Esophagus muscularis mucosa (tissue), 4 donors: ENCODE measurements at regions of chr7 and their contacts with region 1.

Region 1: GRCh38 chr7:41705109-41705901 is 2.4 kb upstream of the INHBA start:
- DNase-seq: peak; percentile 95
- H3K4me3 ChIP-seq: peak overlapping the region; percentile 56 to 66 (median 58)
- H3K27ac ChIP-seq: peak overlapping the region; percentile 83 to 94 (median 88)
- H3K4me1 ChIP-seq: peaks cover 19 to 62% (median 59%) of the 10 kb centered on the region in 4 donors
- H3K27me3 ChIP-seq: no peaks in the 10 kb centered on the region
- CTCF ChIP-seq: peak; percentile 69 to 74 (median 73)
- EP300 ChIP-seq: no peak
- POLR2A ChIP-seq: no peak

Region 2: DNA sequence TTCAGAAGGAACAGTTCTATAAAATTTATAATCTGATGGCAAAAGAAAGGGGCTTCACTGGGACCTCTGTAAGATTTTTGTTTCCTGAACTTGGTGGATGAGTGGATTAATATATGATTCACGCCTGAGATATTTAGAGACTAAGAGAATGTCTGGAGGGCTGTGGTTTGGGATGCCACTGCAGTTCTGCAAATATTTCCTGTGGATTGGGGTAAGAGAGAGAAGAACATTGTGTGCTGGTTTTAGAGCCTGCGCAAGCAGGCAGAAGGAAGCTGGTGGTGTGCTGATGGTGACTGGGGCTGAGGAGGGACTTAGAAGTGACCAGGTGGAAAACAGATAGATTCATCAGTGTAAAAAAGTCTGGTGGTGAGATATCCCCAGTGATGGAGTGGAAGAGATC is 1483.5 kb before region 1 on chr7:
- intact Hi-C with region 1: loop called (anchors 10 kb)
- DNase-seq: no peak
- H3K4me3 ChIP-seq: no peak overlapping the region
- H3K27ac ChIP-seq: peak overlapping the region; percentile 52 to 78 (median 66)
- H3K4me1 ChIP-seq: peaks cover 0 to 48% (median 36%) of the 10 kb centered on the region in 4 donors
- H3K27me3 ChIP-seq: no peaks in the 10 kb centered on the region
- CTCF ChIP-seq: no peak
- EP300 ChIP-seq: no peak
- POLR2A ChIP-seq: no peak

Region 3: DNA sequence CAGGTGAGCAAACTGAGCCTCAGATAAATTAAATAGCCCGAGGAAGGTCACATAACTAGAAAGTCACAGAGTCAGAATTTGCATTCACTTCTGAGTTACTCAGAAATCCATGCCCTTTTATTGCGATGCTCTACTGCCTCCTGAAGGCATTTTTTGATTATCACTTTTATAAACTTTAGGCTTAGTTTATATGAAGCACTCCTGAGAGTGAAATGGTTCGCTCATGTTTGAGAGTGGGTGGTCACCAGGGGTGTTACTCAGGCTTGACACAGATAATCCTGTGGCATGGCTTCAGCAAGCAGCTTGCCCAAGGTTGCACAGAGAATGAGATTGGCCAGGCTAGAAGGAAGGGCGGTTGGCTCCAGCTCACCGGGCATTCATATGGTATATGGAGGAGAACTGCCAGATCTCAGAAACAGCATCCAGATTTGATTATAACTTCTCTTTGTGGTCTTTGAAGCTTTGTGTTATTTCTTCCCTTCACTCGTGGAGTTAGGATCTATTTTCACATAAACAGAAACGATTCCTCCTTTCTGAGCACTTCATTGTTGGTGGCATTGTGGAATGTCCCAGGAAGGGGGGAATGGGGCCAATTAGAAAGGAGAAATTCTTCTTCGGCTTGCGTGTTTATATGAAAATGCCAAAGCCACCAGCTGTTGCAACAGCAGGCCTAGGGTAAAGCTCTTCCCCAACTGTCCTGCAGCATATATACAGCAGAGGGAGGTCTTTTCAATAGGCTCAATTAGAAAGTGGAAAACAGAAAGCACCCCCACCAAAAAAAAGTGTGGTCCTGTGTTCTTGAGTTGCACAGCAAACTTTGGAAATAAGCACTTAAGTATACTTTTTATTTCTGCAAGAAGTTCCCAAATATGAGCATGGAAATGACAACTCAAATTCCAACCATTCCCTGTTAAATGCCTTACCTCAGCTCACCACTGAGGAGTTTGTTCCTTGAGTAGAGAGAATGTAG is 941.7 kb before region 1 on chr7:
- intact Hi-C with region 1: loop called (anchors 2 kb)
- DNase-seq: no peak
- H3K4me3 ChIP-seq: peak overlapping the region in 1 of 4 donors; percentile 27
- H3K27ac ChIP-seq: peak overlapping the region; percentile 61 to 78 (median 77)
- H3K4me1 ChIP-seq: peaks cover 7 to 59% (median 54%) of the 10 kb centered on the region in 4 donors
- H3K27me3 ChIP-seq: no peaks in the 10 kb centered on the region
- CTCF ChIP-seq: peak; percentile 19 to 53 (median 37)
- EP300 ChIP-seq: no peak
- POLR2A ChIP-seq: no peak

Region 4: DNA sequence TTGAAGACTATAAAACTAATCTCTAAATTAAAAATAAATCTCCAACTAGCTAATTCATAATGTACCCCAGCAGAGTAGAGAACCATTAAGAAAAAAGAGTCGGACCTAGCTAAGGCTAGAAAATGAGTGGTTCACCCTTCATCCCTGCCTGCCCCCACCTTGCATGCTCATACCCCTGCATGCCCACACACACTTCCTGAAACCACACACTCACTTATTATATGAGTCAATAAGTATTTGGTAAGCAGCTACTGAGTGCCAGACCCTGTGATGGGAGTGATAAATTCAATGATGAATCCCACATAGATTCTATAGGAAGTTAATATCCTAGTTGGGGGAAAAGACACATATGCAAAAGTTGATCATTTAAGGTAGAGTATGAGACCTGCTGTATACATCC is 150.5 kb after region 1 on chr7:
- intact Hi-C with region 1: no loop called
- DNase-seq: no peak
- H3K4me3 ChIP-seq: no peak overlapping the region
- H3K27ac ChIP-seq: no peak overlapping the region
- H3K4me1 ChIP-seq: no peaks in the 10 kb centered on the region
- H3K27me3 ChIP-seq: no peaks in the 10 kb centered on the region
- CTCF ChIP-seq: no peak
- EP300 ChIP-seq: no peak
- POLR2A ChIP-seq: no peak